Spleen (tissue), 13 donors: ENCODE measurements at regions of chr12 and their contacts with region 1.

Region 1: DNA sequence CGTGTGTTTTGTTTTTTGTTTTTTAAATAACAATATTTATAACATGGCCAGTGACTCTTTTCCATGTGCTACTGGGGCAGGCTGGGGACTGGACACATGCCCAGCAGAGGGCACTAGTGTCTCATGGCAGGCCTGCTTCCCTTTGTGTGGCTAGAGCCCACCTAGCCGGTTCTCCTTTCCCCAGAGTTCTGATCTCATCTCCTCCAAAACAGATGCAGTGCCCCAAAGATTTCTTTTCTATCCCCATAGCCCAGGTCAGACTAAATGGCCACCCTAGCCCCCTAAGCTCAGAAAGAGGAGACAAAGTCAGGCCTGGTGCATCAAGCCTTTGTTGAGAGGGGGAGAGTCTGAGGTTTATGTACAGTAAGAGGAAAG is 21.2 kb downstream of the PRPF40B start:
- DNase-seq: peak; percentile 94
- H3K4me3 ChIP-seq: no peak overlapping the region
- H3K27ac ChIP-seq: peak overlapping the region in 4 of 8 donors; percentile 15 to 52 (median 30)
- H3K4me1 ChIP-seq: peaks cover 12 to 53% (median 32%) of the 10 kb centered on the region in 6 donors
- H3K27me3 ChIP-seq: no peaks in the 10 kb centered on the region
- CTCF ChIP-seq: peak; percentile 95 to 98 (median 97)
- POLR2A ChIP-seq: no peak

Region 2: GRCh38 chr12:49707812-49708147 is 63.2 kb after region 1 on chr12:
- intact Hi-C with region 1: loop called (anchors 2 kb)
- DNase-seq: no peak
- H3K4me3 ChIP-seq: peak overlapping the region in 2 of 8 donors; percentile 67 to 95
- H3K27ac ChIP-seq: peak overlapping the region in 3 of 8 donors; percentile 90 to 95 (median 93)
- H3K4me1 ChIP-seq: peaks cover 21 to 50% (median 43%) of the 10 kb centered on the region in 6 donors
- H3K27me3 ChIP-seq: peaks cover 0 to 12% (median 0%) of the 10 kb centered on the region in 7 donors
- CTCF ChIP-seq: peak in 3 of 11 experiments; percentile 31 to 56 (median 56)
- POLR2A ChIP-seq: no peak

Region 3: DNA sequence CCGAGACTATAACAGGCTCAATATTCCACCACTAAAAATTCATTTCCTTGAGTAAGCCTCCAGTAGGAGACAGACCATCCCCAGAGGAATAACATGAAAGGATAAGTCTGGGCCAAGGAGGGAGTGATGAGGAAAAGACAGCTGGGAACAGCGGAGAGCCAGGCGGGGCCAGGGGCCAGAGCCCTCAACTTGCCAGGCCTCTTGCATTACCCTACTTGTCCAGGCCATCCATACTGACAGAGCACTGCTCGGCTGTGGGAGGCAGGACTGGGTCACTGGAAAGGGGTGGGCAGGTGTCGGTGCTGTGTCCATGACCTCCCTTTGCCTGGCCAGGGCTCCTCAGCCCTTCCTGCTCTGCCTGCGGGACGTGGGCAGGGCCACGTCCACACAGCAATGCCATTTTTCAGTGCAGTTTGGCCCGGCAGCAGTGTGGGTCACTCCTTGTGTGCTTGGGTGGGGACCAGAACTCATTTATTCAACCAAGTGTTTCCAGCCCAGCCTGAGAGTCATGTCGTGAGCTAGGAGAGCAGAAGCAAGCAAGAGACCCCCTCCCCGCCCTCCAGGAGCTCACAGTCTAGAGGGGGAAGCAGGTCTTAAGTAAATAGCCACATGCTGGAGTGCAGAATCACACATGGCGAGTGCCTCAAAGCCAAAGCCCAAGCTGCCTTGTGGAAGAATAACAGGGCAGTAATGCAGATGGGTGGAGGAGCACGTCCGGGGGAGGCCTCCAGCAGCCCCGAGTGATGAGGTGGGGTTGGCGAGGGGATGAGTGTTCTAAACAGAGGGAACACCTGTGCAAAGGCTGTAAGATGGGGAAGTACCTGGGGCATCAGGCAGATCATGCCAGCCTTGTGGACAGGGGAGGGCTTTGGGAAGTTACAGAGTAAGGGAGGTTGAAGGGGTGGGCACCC is 268.0 kb after region 1 on chr12:
- intact Hi-C with region 1: no loop called
- DNase-seq: peak; percentile 51
- H3K4me3 ChIP-seq: no peak overlapping the region
- H3K27ac ChIP-seq: no peak overlapping the region
- H3K4me1 ChIP-seq: no peaks in the 10 kb centered on the region
- H3K27me3 ChIP-seq: peaks cover 0 to 9% (median 0%) of the 10 kb centered on the region in 7 donors
- CTCF ChIP-seq: no peak
- POLR2A ChIP-seq: no peak